ENCODE measurements at regions of chr1 and their contacts with region 1.

Region 1: DNA sequence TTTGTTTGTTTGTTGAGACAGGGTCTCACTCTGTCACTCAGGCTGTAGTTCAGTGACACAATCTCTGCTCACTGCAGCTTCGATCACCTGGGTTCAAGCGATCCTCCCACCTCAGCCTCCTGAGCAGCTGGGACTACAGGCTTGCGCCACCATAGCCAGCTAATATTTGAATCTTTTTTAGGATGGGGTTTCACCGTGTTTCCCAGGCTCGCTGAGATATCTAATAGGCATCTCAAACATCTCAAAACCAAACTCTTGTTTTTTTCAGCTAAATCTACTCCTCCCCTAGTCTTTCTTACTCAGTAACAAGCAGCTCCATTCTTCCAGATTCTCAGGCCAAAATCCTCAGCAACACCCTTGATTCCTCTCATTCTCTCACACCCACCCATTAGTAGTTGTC is 22.0 kb upstream of the SRRM1 start:
- DNase-seq: no peak
- ATAC-seq: no peak
- H3K4me3 ChIP-seq: no peak overlapping the region
- H3K27ac ChIP-seq: no peak overlapping the region
- H3K4me1 ChIP-seq: no peaks in the 10 kb centered on the region
- H3K27me3 ChIP-seq: peaks cover 0 to 12% (median 0%) of the 10 kb centered on the region in 3 donors
- CTCF ChIP-seq: no peak

Region 2: DNA sequence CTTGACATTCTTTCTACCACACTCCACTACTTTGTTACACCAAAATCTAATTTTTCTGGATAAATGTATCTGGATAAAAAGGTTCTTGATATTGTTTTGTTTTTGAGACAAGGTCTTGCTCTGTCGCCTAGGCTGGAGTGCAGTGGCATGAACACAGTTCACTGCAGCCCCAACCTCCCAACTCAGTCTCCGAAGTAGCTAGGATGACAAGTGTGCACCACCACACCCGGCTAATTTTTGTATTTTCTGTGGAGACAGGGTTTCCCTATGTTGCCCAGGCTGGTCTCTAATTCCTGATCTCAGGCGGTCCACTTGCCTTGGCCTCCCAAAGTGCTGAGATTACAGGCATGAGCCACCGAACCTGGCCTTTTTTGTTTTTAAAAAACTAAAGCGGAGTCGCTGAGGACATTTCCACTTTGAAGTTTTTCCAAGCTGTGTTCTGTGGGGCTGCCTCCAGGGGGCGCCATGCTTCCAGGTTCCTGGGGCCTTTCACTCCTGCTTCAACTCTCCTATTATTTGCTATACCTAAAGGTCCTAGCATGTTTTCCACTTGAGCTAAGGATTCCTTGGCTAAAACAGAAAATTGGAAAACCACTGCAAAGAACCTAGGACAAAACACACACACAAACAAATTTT is 79.3 kb before region 1 on chr1:
- intact Hi-C with region 1: loop called in 1 of 2 experiments (anchors 10 kb)
- DNase-seq: no peak
- ATAC-seq: no peak
- H3K4me3 ChIP-seq: no peak overlapping the region
- H3K27ac ChIP-seq: no peak overlapping the region
- H3K4me1 ChIP-seq: no peaks in the 10 kb centered on the region
- H3K27me3 ChIP-seq: no peaks in the 10 kb centered on the region
- CTCF ChIP-seq: peak; percentile 42